ENCODE measurements at regions of chr7 and their contacts with region 1.

Region 1: DNA sequence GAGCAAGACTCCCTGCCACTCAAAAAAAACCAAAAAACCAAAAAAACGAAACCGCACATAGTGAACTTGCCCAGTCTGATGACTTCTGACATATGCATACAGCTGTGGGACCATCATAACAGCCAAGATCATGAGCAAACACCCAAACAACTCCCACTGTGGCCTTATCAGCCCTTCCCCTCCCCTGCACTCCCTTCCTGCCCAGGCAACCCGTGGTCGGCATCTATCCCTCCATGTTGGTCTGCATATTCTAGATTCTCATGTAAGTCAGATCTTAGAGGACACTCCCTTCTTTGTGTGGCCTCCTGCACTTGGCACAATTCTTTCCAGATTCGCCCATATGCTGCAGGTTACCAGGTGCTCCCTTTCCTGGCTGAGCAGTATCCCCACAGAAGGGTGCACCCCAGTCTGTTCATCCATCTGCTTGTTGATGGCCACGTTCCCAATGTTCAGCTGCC is 72.8 kb downstream of the GNA12 start:
- DNase-seq: no peak
- H3K4me3 Mint-ChIP-seq: no peak overlapping the region
- H3K27ac Mint-ChIP-seq: peak overlapping the region; percentile 86
- H3K4me1 Mint-ChIP-seq: peaks cover 36% of the 10 kb centered on the region
- H3K27me3 Mint-ChIP-seq: no peaks in the 10 kb centered on the region

Region 2: DNA sequence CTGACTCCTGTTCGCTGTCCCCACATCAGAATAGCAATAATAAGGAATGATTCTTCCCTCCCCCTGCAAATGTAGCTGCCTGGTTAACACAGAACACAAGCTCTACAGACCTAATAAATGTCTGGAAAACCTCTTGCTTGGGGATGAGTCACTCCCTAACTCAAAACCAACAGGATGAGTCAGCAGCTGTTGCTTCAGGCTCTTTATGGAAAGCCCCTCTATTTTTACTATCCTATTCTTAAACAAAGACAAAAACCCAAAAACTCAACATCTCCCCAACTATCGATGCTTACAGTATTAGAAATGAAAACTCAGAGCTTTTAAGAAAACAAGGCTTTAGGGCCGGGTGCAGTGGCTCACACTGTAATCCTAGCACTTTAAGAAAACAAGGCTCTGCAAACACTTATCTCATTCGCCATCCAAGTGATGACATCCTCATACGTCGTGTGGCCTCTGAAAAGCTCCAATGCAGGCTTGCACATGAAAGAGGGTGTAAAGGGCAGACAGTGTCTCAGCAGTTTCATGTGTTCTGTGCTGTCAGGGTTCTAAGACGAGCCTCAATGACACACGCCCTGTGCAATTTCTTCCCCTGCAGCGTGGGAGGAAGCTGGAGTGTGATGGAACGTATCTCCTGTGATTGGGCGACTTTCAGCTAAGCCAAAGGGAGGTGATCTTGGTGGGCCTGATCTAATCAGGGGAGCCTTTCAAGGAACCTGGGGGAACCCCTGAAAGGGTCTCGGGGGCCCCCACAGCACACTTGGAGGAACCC is 13.2 kb before region 1 on chr7:
- intact Hi-C with region 1: loop called (anchors 1 kb)
- DNase-seq: peak; percentile 90
- H3K4me3 Mint-ChIP-seq: peak overlapping the region; percentile 56
- H3K27ac Mint-ChIP-seq: peak overlapping the region; percentile 95
- H3K4me1 Mint-ChIP-seq: peaks cover 41% of the 10 kb centered on the region
- H3K27me3 Mint-ChIP-seq: no peaks in the 10 kb centered on the region

Region 3: DNA sequence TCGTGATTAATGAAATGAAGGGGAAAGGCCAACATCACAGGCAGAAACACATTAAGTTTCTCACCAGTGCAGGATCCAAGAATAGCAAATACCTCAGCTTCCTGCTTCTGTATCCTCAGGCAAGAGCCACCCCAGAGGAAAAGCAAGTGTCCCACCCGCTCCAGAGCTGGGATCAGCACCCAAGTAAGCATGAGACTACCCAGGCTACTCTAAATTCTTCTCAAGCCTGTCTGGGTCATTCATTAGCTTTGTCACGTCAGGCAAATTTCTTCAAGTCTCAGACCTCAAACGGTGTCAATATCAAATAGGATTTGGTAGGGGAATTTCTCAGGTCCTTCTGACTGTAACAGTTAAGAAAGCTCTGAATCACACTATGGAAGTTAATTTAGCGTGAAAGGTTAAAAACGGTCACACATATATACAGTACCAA is 13.8 kb after region 1 on chr7:
- intact Hi-C with region 1: loop called (anchors 1 kb)
- DNase-seq: no peak
- H3K4me3 Mint-ChIP-seq: no peak overlapping the region
- H3K27ac Mint-ChIP-seq: no peak overlapping the region
- H3K4me1 Mint-ChIP-seq: peaks cover 29% of the 10 kb centered on the region
- H3K27me3 Mint-ChIP-seq: no peaks in the 10 kb centered on the region

Region 4: GRCh38 chr7:2807845-2808772 is 36.8 kb after region 1 on chr7:
- intact Hi-C with region 1: no loop called
- DNase-seq: no peak
- H3K4me3 Mint-ChIP-seq: no peak overlapping the region
- H3K27ac Mint-ChIP-seq: no peak overlapping the region
- H3K4me1 Mint-ChIP-seq: peaks cover 9% of the 10 kb centered on the region
- H3K27me3 Mint-ChIP-seq: no peaks in the 10 kb centered on the region

Region 5: GRCh38 chr7:2821161-2821841 is 50.0 kb after region 1 on chr7:
- intact Hi-C with region 1: loop called (anchors 1 kb)
- DNase-seq: no peak
- H3K4me3 Mint-ChIP-seq: no peak overlapping the region
- H3K27ac Mint-ChIP-seq: no peak overlapping the region
- H3K4me1 Mint-ChIP-seq: peaks cover 36% of the 10 kb centered on the region
- H3K27me3 Mint-ChIP-seq: no peaks in the 10 kb centered on the region

Region 6: GRCh38 chr7:2844165-2844898 is 73.0 kb after region 1 on chr7 and contains the start of gene GNA12:
- intact Hi-C with region 1: loop called (anchors 5 kb)
- DNase-seq: peak; percentile 100
- H3K4me3 Mint-ChIP-seq: peak within 1 kb of the TSS; percentile 85
- H3K27ac Mint-ChIP-seq: peak within 1 kb of the TSS; percentile 71
- H3K4me1 Mint-ChIP-seq: peaks cover 39% of the 10 kb centered on the region
- H3K27me3 Mint-ChIP-seq: no peaks in the 10 kb centered on the region
- total RNA-seq, gene GNA12: 30.6 and 31.0 TPM in 2 replicates

Region 7: GRCh38 chr7:3092468-3092867 is 321.2 kb after region 1 on chr7:
- intact Hi-C with region 1: loop called (anchors 10 kb)
- DNase-seq: peak; percentile 93
- H3K4me3 Mint-ChIP-seq: peak overlapping the region; percentile 22
- H3K27ac Mint-ChIP-seq: peak overlapping the region; percentile 86
- H3K4me1 Mint-ChIP-seq: peaks cover 51% of the 10 kb centered on the region
- H3K27me3 Mint-ChIP-seq: no peaks in the 10 kb centered on the region

Region 8: DNA sequence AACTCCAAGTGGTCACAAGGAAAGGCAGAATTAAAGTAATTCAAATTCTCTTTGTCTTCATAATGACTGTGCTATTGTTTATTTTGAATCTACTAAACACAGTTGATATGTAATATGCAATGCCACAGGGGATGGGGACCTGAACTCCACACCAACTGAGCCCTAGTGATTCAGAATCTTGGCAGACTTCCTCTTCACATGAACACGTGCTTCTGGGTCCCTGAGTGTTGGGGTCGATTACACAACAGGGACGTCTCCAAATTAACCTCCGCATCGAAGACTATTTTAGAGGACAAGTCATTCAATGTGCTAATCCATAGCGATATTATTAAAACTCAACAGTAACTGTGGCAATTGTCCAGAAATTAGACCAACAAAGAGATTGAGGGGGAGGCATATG is 367.7 kb after region 1 on chr7:
- intact Hi-C with region 1: no loop called
- DNase-seq: no peak
- H3K4me3 Mint-ChIP-seq: no peak overlapping the region
- H3K27ac Mint-ChIP-seq: no peak overlapping the region
- H3K4me1 Mint-ChIP-seq: peaks cover 5% of the 10 kb centered on the region
- H3K27me3 Mint-ChIP-seq: peaks cover 14% of the 10 kb centered on the region